Activated B cell treated with CpG ODN at 0.5 μM for 24 hours (primary cell): ENCODE measurements at regions of chr10 and their contacts with region 1.

Region 1: GRCh38 chr10:103192451-103193106 is 493 bp downstream of the NT5C2 start:
- DNase-seq: peak; percentile 59
- ATAC-seq: peak; percentile 47
- H3K4me3 Mint-ChIP-seq: peak overlapping the region; percentile 99
- H3K27ac Mint-ChIP-seq: peak overlapping the region; percentile 96
- H3K4me1 Mint-ChIP-seq: peaks cover 47% of the 10 kb centered on the region
- H3K27me3 Mint-ChIP-seq: no peaks in the 10 kb centered on the region
- CTCF ChIP-seq: no peak

Region 2: GRCh38 chr10:102743588-102744373 is 448.8 kb before region 1 on chr10 and contains the start of gene WBP1L:
- CTCF ChIA-PET with region 1: no interaction called
- POLR2A ChIA-PET with region 1: no interaction called
- intact Hi-C with region 1: loop called (anchors 1 kb)
- DNase-seq: peak; percentile 81
- ATAC-seq: peak; percentile 98
- H3K4me3 Mint-ChIP-seq: peak within 1 kb of the TSS; percentile 93
- H3K27ac Mint-ChIP-seq: peak within 1 kb of the TSS; percentile 87
- H3K4me1 Mint-ChIP-seq: peaks cover 47% of the 10 kb centered on the region
- H3K27me3 Mint-ChIP-seq: no peaks in the 10 kb centered on the region
- CTCF ChIP-seq: no peak
- total RNA-seq, gene WBP1L: 30.5 and 30.8 TPM in 2 replicates

Region 3: DNA sequence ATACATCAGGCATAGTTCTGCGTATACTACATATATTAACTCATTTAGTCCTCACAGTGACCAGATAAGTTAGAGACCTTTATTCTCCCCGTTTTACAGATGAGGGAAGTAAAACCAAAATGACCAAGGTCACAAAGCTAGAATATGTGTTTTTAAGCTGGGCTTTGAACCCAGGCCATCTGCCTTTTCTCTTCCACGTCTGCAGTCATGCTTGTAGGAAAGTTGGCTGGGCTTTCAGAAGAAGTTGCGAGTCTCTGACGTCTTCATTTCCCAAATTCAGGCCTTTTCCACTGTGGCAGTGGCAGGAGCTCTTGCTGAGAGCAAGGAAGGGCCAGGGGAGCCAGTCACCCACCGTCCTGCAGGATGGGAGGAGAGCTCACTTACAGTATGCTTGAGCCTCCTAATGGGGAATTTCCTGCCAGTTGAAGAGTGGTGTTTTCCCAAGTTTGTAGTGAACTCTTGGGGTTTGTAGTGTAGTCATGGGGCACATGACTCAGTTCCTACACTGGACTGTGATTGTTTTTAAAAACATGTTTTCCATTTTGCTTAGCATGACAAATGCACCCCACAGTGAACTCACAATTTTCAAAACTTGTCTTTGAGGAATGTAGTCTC is 389.6 kb before region 1 on chr10:
- CTCF ChIA-PET with region 1: no interaction called
- POLR2A ChIA-PET with region 1: no interaction called
- intact Hi-C with region 1: no loop called
- DNase-seq: no peak
- ATAC-seq: peak; percentile 67
- H3K4me3 Mint-ChIP-seq: no peak overlapping the region
- H3K27ac Mint-ChIP-seq: peak overlapping the region; percentile 67
- H3K4me1 Mint-ChIP-seq: peaks cover 33% of the 10 kb centered on the region
- H3K27me3 Mint-ChIP-seq: no peaks in the 10 kb centered on the region
- CTCF ChIP-seq: no peak

Region 4: DNA sequence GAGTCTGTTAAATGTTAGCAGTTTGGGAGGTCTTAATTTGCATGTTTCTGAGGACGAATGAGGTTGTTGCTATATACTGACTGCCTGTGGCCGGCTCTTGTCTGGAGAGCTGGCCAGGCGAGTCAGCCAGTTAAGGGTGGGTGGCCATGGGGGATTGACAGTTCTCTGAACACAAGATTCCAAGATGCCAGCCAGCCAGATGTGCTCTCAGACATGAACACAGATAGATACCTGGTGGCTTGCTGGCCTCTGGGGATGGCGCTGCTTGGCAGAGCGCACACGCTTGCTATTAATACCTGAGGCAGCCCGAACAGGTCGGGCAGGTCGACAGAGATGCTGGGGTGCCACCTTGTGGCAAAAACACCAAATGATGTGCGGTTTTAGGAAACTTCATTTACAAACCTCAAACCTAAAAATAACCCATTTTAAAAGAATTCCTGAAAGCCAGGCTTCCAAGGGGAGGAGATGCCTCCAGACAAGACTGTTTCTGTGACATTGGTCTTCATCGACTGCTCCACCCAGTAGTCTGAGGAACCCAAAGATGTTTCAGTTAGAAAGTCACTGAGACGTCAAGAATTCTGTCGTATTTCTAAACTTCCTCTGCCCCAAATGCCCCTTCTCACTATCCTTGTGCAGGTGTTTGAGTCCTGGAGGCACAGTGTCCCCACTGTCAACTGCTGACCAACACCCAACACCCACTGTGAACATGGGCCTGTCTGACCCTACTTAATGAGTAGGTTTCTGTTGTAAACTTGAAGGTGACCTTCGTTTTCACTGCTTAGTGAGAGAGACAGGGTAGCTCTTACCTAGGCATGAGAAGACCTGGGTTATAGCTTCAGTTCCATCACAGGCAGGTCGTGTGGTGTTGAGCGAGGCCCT is 122.9 kb before region 1 on chr10:
- CTCF ChIA-PET with region 1: no interaction called
- POLR2A ChIA-PET with region 1: interaction called, 7 read pairs
- intact Hi-C with region 1: loop called (anchors 5 kb)
- DNase-seq: peak; percentile 40
- ATAC-seq: peak; percentile 82
- H3K4me3 Mint-ChIP-seq: peak overlapping the region; percentile 55
- H3K27ac Mint-ChIP-seq: peak overlapping the region; percentile 73
- H3K4me1 Mint-ChIP-seq: peaks cover 33% of the 10 kb centered on the region
- H3K27me3 Mint-ChIP-seq: no peaks in the 10 kb centered on the region
- CTCF ChIP-seq: no peak

Region 5: GRCh38 chr10:103175580-103176285 is 16.8 kb before region 1 on chr10:
- CTCF ChIA-PET with region 1: interaction called, 5 read pairs
- POLR2A ChIA-PET with region 1: interaction called, 46 read pairs
- intact Hi-C with region 1: loop called (anchors 2 kb)
- DNase-seq: no peak
- ATAC-seq: no peak
- H3K4me3 Mint-ChIP-seq: no peak overlapping the region
- H3K27ac Mint-ChIP-seq: no peak overlapping the region
- H3K4me1 Mint-ChIP-seq: peaks cover 32% of the 10 kb centered on the region
- H3K27me3 Mint-ChIP-seq: no peaks in the 10 kb centered on the region
- CTCF ChIP-seq: no peak

Region 6: GRCh38 chr10:103244663-103245271 is 52.2 kb after region 1 on chr10:
- CTCF ChIA-PET with region 1: interaction called, 3 read pairs
- POLR2A ChIA-PET with region 1: interaction called, 5 read pairs
- intact Hi-C with region 1: loop called (anchors 2 kb)
- DNase-seq: peak; percentile 49
- ATAC-seq: peak; percentile 74
- H3K4me3 Mint-ChIP-seq: no peak overlapping the region
- H3K27ac Mint-ChIP-seq: no peak overlapping the region
- H3K4me1 Mint-ChIP-seq: peaks cover 20% of the 10 kb centered on the region
- H3K27me3 Mint-ChIP-seq: peaks cover 4% of the 10 kb centered on the region
- CTCF ChIP-seq: no peak